Panc1 (cell line): ENCODE measurements at regions of chr4 and their contacts with region 1.

Region 1: GRCh38 chr4:105146276-105147015 is at the start of gene TET2:
- DNase-seq: peak; percentile 25
- ATAC-seq: peak; percentile 94
- H3K4me3 ChIP-seq: peak within 1 kb of the TSS; percentile 85 to 93
- H3K27ac ChIP-seq: peak within 1 kb of the TSS; percentile 95
- H3K4me1 ChIP-seq: no peaks in the 10 kb centered on the region
- H3K27me3 ChIP-seq: no peaks in the 10 kb centered on the region
- CTCF ChIP-seq: no peak
- total RNA-seq, gene TET2: 7.0 TPM

Region 2: DNA sequence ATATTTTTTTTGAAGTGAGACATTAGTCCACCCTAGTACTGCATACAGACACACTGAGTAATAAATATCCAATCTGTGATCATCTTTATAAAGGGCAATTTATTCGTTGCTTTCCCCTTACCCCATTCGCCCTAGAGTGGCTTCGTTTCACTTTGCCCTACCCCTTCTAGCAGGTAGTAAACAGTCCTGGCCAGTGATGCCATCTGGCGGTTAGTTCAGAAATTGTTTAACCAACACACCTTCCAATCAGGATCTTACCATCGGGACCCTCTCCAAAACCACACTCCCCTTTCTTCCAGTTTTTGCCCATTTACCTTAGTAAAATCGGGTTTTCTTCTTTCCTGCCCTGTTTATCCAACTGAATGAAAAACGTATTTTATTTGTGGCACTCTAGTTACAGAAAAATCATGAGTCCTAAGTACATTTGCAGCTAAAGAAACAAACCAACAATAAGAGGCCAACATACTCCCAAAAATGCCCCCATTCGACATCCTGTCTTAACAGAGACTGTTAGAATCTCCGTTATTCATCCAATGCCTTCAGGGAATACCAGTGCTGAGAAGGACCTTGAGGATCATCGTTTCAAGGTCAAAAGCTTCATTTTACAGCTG is 325.2 kb after region 1 on chr4:
- CTCF ChIA-PET with region 1: interaction called, 5 read pairs
- POLR2A ChIA-PET with region 1: no interaction called
- in situ Hi-C with region 1: no loop called
- intact Hi-C with region 1: loop called (anchors 2 kb)
- DNase-seq: no peak
- ATAC-seq: peak; percentile 65
- H3K4me3 ChIP-seq: peak overlapping the region; percentile 75 to 79
- H3K27ac ChIP-seq: peak overlapping the region; percentile 75
- H3K4me1 ChIP-seq: peaks cover 9% of the 10 kb centered on the region
- H3K27me3 ChIP-seq: no peaks in the 10 kb centered on the region
- CTCF ChIP-seq: peak; percentile 72